ENCODE measurements at regions of chr15 and their contacts with region 1.

Region 1: DNA sequence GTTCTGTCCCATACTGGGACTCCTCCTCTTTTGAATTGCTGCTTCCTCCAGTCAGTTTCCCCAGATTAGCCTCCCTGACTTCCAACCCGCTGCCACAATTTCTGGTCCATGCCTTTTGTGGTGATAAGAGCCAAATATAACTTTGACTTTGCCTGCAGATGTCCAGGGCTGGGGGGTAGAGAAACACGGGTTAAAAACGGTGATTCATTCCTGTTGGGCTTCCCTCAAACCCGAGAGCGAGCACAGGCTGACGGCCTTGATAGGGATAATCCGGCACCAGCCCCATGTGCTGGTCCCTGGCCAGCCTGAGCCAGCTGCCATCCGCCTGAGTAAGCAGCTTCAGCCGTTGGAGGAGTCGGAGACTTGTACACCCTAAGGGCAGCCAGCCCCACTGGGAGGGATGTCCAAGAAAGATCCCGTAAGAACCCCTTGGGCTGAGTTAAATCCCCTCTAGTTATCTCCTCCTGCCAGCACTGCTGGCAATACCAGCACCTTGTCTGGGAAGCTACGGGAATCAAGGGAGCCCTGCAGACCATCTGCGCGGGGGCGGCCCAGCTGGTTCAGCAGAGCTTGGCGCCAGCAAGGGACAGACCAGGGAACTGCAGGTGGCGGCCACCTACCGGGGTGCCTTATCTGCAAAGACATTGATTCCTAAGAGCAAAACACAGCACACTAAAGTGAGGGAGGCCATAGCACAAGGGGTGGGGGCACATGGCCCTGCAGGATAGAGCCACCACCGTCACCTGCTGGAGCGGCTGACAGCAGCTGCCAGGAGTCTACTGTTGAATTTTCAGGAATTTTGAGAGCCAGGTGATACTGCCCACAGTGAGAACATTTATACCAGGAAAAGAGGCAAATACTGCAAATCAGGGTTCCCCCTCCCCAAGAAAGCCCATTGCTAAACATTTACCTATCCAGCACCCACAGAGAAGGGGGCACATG is 18.1 kb downstream of the CSPG4 start:
- DNase-seq: peak; percentile 96
- H3K4me3 ChIP-seq: no peak overlapping the region
- H3K27ac ChIP-seq: peak overlapping the region; percentile 80
- H3K4me1 ChIP-seq: peaks cover 60% of the 10 kb centered on the region
- H3K27me3 ChIP-seq: no peaks in the 10 kb centered on the region
- CTCF ChIP-seq: peak; percentile 20 to 63

Region 2: DNA sequence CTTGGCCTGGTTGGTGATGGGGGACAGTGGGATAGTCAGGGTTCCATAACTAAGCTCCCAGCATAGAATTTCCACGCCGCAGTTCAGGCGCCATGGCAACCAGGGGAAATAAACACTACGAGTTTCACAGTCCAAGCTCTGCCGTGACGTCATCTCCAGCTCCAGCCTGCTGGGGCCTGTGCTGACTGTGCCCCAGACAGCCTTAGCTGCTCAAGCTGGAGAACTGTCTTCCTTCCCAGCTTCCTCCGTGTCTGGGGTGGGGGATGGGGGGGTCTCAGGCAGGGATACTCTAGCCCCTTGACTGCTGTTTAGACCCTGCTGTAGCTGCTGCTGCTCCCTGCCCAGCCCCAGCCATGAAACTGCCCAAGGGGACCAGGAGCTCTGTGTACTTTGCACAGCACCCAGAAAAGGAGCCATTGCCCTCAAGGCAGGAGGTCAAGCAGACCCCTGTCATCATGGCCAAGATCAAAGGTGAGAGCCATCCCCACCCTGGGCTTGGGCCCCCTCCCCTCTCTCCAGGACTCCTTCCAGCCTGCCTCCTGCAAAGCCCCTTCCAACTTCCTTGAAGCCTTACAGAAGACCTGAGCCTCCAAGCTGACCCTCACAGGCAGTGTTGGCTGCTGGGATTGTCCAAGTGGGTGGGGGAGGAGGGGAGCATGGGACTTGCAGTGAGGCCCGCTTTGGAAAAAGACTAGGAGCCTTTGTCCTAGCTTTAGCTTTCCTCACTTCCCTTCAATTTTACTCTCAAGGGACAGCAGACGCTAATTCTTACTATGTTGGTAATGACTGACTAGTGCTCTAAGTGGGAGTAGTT is 29.5 kb after region 1 on chr15:
- CTCF ChIA-PET with region 1: interaction called, 5 read pairs
- dilution Hi-C with region 1: no loop called
- in situ Hi-C with region 1: no loop called
- intact Hi-C with region 1: loop called (anchors 1 kb)
- DNase-seq: peak; percentile 90
- H3K4me3 ChIP-seq: no peak overlapping the region
- H3K27ac ChIP-seq: peak overlapping the region; percentile 87
- H3K4me1 ChIP-seq: peaks cover 21% of the 10 kb centered on the region
- H3K27me3 ChIP-seq: no peaks in the 10 kb centered on the region
- CTCF ChIP-seq: no peak

Measured in mammary epithelial cell (primary cell).